ENCODE measurements at regions of chr13 and their contacts with region 1.

Region 1: DNA sequence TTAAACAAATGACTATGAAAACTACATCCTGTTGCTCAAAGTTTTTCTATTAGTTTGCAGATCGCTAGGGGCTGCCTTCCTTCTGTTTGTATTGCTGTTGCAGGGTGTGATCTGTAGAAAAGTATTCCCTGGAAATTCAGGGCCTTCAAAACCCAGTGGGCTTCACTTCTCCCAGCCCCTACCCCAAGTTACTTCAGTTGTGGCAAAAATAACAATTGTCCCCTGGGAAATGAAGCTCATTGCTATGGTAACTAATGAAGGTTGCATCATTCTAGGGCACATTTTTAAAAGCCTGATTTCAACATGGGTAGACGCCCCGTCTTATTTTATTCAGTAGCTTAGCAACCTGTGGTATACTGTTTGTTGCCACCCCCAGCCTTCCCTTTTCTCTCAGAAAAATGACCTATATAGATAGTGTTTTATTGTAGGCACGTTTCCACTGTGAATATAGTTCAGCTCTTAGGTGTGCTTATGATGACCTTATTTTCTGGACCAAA is 60.9 kb downstream of the WDFY2 start:
- DNase-seq: peak in 1 of 4 donors; percentile 52
- ATAC-seq: peak; percentile 64
- H3K4me3 ChIP-seq: no peak overlapping the region
- H3K27ac ChIP-seq: peak overlapping the region in 2 of 4 donors; percentile 4 to 61
- H3K4me1 ChIP-seq: peaks cover 54% of the 10 kb centered on the region
- H3K27me3 ChIP-seq: no peaks in the 10 kb centered on the region
- CTCF ChIP-seq: no peak
- POLR2A ChIP-seq: no peak

Region 2: GRCh38 chr13:51479199-51479523 is 166.0 kb before region 1 on chr13:
- intact Hi-C with region 1: no loop called
- DNase-seq: no peak
- ATAC-seq: no peak
- H3K4me3 ChIP-seq: no peak overlapping the region
- H3K27ac ChIP-seq: peak overlapping the region in 2 of 4 donors; percentile 37 to 49
- H3K4me1 ChIP-seq: peaks cover 22% of the 10 kb centered on the region
- H3K27me3 ChIP-seq: no peaks in the 10 kb centered on the region
- CTCF ChIP-seq: no peak
- POLR2A ChIP-seq: no peak

Region 3: GRCh38 chr13:51590971-51591627 is 54.1 kb before region 1 on chr13:
- intact Hi-C with region 1: loop called (anchors 10 kb)
- DNase-seq: peak; percentile 34 to 67 (median 48)
- ATAC-seq: peak; percentile 80
- H3K4me3 ChIP-seq: no peak overlapping the region
- H3K27ac ChIP-seq: peak overlapping the region; percentile 68 to 83 (median 75)
- H3K4me1 ChIP-seq: peaks cover 92% of the 10 kb centered on the region
- H3K27me3 ChIP-seq: no peaks in the 10 kb centered on the region
- CTCF ChIP-seq: peak in 1 of 7 experiments; percentile 14
- POLR2A ChIP-seq: no peak

Region 4: DNA sequence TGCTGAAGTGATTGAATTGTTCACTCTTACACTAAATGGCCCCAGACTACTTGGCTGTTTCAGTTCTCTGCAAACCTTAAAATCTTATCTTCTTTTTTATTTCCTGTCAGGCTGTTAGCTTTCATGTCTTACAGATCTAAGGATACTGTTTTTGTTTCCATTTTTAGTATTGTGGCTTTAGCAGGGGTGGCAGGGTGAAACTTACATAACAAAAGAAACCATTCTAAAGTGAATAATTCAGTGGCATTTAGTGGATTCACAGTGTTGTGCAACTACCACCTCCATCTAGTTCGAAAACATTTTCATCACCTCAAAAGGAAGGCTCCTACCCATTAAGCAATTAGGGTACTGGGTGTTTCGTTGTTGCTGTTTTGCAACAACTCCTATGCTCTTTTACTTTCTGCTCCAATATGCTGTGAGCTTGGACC is 180.0 kb after region 1 on chr13:
- intact Hi-C with region 1: no loop called
- DNase-seq: no peak
- ATAC-seq: no peak
- H3K4me3 ChIP-seq: no peak overlapping the region
- H3K27ac ChIP-seq: no peak overlapping the region
- H3K4me1 ChIP-seq: no peaks in the 10 kb centered on the region
- H3K27me3 ChIP-seq: no peaks in the 10 kb centered on the region
- CTCF ChIP-seq: no peak
- POLR2A ChIP-seq: no peak